ENCODE measurements at regions of chr16 and their contacts with region 1.

Region 1: GRCh38 chr16:13919683-13920509 is at the start of gene ERCC4:
- DNase-seq: peak; percentile 99 to 100
- ATAC-seq: peak; percentile 98
- total RNA-seq, gene ERCC4: 6.3 to 6.6 TPM

Region 2: GRCh38 chr16:13229039-13229438 is 690.9 kb before region 1 on chr16:
- intact Hi-C with region 1: no loop called
- DNase-seq: no peak
- ATAC-seq: no peak

Region 3: DNA sequence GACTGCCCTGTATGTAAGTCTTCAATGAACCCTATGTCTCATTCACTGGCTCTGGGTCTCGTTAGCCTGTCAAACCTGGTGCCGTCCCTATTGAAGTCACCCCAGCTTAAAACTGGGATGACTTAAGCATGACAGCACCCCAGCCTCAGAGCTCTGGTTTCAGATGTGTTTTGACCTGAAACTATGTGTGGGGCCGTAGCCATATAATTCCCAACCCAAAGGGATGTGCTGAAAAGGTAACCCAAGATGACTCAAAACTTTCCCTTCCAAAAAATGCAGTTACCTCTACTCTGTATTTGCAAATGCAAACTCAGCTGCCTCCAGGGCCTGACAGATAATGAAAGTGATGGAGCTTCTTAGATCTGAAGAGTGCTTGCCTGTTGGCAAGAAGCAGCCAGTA is 478.2 kb before region 1 on chr16:
- intact Hi-C with region 1: no loop called
- DNase-seq: no peak
- ATAC-seq: no peak

Region 4: DNA sequence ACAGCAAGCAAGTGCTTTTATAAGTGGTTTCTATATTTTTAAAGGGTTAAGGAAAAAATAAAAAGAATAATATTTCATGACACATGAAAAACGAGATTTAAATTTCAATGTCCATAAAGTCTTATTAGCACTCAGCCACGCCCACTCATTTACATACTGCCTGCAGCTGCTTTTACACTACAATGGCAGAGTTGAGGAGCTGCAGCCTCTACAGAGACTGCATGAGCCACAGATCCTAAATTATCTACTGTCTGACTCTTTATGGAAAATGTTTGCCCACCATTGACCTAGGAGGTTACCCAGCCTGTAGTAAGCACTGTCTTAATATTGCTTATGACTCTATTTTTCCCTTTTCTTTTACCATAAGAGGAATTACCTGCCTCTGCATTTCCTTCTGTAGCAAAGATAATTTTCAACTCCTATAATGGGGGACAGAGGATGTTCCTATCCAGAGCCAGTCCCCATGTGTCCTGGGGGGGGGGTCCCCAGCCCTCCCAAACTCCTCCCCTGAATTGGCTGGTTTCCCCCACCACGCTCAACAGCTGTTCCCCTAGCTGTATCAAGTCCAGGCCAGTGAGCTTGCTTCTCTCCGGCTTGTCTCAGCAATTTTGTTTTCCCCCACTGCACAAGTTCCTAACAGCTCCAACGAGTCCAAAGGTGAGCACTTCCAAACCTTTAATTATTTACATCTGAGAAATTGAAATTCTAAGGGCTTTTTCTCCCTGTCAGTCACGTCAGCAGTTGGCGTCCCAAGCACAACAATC is 139.3 kb before region 1 on chr16:
- intact Hi-C with region 1: no loop called
- DNase-seq: no peak
- ATAC-seq: no peak

Region 5: GRCh38 chr16:14249291-14250032 is 329.6 kb after region 1 on chr16:
- intact Hi-C with region 1: loop called in 1 of 2 experiments (anchors 10 kb)
- DNase-seq: peak in 1 of 2 donors; percentile 27
- ATAC-seq: peak; percentile 47

Region 6: DNA sequence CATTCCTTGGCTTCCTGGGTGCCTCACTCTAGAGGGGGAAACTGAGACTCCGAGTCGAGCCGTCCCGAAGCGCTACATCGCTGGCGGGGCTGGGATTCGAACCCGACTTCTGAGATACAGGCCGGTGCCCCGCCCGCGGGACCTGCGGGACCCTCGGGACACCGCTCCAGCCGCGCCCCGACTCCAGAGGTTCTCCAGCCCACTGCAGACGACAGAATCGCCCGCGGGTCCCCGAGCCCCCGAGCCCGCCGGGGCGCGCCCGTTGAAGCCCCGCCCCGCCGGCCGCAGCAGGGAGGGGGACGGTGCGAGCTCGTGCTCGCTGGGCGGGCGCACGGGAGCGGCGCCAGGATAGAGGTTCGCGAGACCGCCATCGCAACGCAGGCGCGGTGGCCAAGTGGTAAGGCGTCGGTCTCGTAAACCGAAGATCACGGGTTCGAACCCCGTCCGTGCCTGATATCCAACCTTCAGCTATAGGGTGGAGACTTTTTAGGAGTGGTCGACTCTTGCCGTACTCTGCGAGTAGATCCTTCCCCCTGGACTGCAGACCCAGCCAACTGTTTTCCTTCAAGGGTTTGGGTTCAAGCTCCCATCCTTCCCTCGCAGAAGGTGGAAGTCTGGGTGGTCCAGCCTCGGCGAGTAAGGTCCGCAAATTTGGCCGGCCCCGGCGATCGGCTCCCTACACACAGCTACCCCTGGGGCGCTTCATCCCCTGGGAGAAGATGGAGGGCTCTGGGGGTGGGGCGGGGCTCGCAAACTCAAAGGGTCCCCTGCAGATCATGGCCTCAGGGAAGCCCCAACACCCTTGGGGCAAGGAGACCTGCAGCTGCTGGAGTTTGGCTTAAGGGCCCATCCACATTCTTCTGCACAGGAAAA is 365.9 kb after region 1 on chr16:
- intact Hi-C with region 1: loop called in 1 of 2 experiments (anchors 5 kb)
- DNase-seq: peak; percentile 79 to 94
- ATAC-seq: peak; percentile 88

Region 7: DNA sequence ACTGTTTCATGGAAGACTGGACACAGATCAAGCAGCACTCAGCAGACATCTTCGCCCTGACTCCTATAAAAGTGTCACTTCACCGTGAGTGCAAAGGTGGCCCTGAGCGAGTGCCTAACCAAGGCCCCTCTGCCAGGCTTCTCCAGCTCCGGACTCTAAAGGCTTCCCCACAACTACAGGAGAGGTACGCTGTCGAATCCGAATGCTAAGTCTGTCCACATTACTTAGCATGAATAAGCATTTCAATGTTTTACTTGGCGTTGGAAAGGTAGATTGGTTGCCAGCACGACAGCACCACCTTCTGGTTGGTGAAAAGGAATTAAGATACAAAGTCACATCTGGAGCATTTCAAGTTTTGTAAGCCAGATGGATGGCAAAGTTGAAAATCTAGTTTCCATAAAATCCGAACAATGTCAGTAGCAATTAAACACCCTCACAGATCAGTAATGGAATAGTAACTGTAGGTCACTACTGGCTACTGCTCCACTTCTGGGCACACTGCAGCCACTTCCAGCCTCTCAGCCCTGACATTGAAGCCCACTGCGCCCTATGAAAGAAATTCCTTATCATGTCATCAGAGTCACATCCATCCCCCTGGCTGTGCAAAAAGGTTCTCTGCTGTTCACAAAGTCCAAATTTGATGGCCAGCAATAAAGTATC is 609.2 kb after region 1 on chr16:
- intact Hi-C with region 1: loop called in 1 of 2 experiments (anchors 5 kb)
- DNase-seq: peak; percentile 59 to 64
- ATAC-seq: peak; percentile 93

Measured in left colon (tissue), 2 donors.